Posterior cingulate gyrus (tissue), 11 donors: ENCODE measurements at regions of chr1 and their contacts with region 1.

Region 1: GRCh38 chr1:94463765-94464330 is 45.7 kb downstream of the ABCD3 start:
- DNase-seq: peak in 1 of 10 donors; percentile 15

Region 2: DNA sequence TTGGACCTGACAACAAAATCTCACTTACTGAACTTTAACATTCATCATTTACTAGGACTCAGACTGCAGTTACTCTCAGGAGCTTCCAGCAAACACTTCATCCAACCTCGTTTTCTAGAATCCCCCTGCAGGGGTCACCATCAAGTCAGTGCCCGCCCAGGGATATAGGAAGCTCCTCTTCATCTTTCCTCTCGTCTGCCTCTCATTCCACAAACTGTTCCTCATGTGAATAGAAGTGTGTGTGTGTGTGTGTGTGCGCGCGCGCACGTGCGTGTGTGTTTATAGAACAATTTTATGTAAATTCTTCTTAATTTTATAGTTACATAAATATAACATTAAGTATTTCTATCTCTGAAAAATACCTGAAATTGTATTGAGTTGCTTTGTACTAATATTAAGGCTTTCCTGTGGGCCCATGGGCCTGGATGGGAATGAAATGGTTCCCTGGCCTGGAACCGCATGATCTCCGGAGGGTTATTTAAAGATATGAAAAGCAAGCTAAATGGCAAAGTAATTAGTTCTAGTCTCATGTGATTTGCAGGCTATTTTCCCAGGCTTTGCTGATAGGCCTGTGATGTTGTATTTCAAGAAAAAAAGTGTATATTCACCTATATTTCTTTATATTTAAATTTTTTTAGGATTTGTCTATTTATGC is 67.4 kb before region 1 on chr1:
- intact Hi-C with region 1: loop called (anchors 1 kb)
- DNase-seq: peak in 4 of 10 donors; percentile 3 to 51 (median 20)